ENCODE measurements at regions of chr1 and their contacts with region 1.

Region 1: GRCh38 chr1:84884656-84885389 is 8.2 kb downstream of the LPAR3 start:
- DNase-seq: no peak
- H3K4me3 Mint-ChIP-seq: no peak overlapping the region
- H3K27ac Mint-ChIP-seq: no peak overlapping the region
- H3K4me1 Mint-ChIP-seq: peaks cover 25% of the 10 kb centered on the region
- H3K27me3 Mint-ChIP-seq: no peaks in the 10 kb centered on the region
- CTCF ChIP-seq: no peak

Region 2: GRCh38 chr1:84834419-84835064 is 50.3 kb before region 1 on chr1:
- CTCF ChIA-PET with region 1: interaction called, 3 read pairs
- intact Hi-C with region 1: loop called (anchors 5 kb)
- DNase-seq: peak; percentile 44
- H3K4me3 Mint-ChIP-seq: peak overlapping the region; percentile 65
- H3K27ac Mint-ChIP-seq: peak overlapping the region; percentile 100
- H3K4me1 Mint-ChIP-seq: peaks cover 60% of the 10 kb centered on the region
- H3K27me3 Mint-ChIP-seq: no peaks in the 10 kb centered on the region
- CTCF ChIP-seq: no peak

Region 3: GRCh38 chr1:84936116-84936810 is 51.4 kb after region 1 on chr1:
- CTCF ChIA-PET with region 1: no interaction called
- intact Hi-C with region 1: no loop called
- DNase-seq: peak; percentile 25
- H3K4me3 Mint-ChIP-seq: no peak overlapping the region
- H3K27ac Mint-ChIP-seq: no peak overlapping the region
- H3K4me1 Mint-ChIP-seq: no peaks in the 10 kb centered on the region
- H3K27me3 Mint-ChIP-seq: no peaks in the 10 kb centered on the region
- CTCF ChIP-seq: peak; percentile 85

Region 4: DNA sequence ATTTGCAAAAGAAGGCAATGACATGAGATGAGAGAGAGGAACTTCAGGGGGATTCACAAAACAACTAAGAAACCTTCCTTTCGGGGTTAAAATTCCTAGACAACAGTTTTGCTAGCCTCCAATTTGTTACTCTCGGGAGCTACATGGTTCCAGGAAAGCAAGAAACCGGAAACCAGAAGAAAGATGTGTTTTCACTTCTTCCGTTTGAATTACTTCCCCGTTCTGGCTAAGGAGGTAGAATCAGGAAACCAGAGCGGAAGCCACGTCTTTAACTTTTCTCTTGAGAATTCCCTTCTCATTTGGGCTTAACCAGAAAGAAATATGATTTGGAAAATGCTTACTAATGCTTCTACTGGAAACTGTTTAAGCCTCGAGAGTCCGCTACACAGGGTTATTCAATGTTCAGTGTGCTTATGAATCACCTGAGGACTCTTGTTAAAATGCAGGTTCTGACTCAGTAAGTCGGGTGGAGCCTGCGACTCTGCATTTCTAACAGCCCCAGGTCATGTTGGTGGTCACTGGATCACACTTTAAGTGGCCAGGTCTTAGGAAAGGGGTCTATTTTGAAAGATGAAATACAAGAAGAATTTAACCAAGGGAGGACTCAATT is 207.0 kb after region 1 on chr1:
- CTCF ChIA-PET with region 1: no interaction called
- intact Hi-C with region 1: no loop called
- DNase-seq: no peak
- H3K4me3 Mint-ChIP-seq: no peak overlapping the region
- H3K27ac Mint-ChIP-seq: no peak overlapping the region
- H3K4me1 Mint-ChIP-seq: peaks cover 9% of the 10 kb centered on the region
- H3K27me3 Mint-ChIP-seq: no peaks in the 10 kb centered on the region
- CTCF ChIP-seq: no peak

Region 5: DNA sequence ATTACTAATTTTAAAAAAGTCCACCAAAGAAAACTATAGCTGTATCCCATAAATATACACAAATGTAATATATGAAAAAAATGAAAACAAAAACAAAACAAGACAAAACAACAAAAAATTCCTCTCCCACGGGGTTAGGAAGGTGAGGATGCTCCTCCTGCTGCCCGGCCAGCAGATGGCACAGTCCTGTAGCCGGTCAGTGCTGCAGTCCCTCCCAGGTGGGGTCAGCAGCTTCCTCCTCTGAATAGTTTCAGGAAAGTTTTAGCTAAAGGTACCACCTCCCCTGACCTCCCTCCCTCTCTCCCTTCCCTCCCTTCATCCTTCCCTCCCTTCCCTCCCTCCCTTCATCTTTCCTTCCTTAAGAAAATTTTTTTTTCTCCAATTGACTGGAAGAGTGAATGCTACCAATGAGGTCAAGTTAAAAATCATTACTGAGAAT is 459.5 kb after region 1 on chr1:
- CTCF ChIA-PET with region 1: no interaction called
- intact Hi-C with region 1: no loop called
- DNase-seq: peak; percentile 78
- H3K4me3 Mint-ChIP-seq: peak overlapping the region; percentile 39
- H3K27ac Mint-ChIP-seq: peak overlapping the region; percentile 96
- H3K4me1 Mint-ChIP-seq: peaks cover 79% of the 10 kb centered on the region
- H3K27me3 Mint-ChIP-seq: no peaks in the 10 kb centered on the region
- CTCF ChIP-seq: peak; percentile 75

Measured in Calu3 (cell line).